MCF 10A (cell line): ENCODE measurements at regions of chr9 and their contacts with region 1.

Region 1: GRCh38 chr9:71384352-71384751 is 262.9 kb upstream of the TRPM3 start:
- DNase-seq: no peak
- H3K4me3 Mint-ChIP-seq: no peak overlapping the region
- H3K27ac Mint-ChIP-seq: no peak overlapping the region
- H3K4me1 Mint-ChIP-seq: no peaks in the 10 kb centered on the region
- H3K27me3 Mint-ChIP-seq: peaks cover 10% of the 10 kb centered on the region
- CTCF ChIP-seq: no peak

Region 2: GRCh38 chr9:71403106-71403505 is 18.8 kb after region 1 on chr9:
- CTCF ChIA-PET with region 1: no interaction called
- POLR2A ChIA-PET with region 1: no interaction called
- intact Hi-C with region 1: loop called (anchors 2 kb)
- DNase-seq: no peak
- H3K4me3 Mint-ChIP-seq: no peak overlapping the region
- H3K27ac Mint-ChIP-seq: no peak overlapping the region
- H3K4me1 Mint-ChIP-seq: no peaks in the 10 kb centered on the region
- H3K27me3 Mint-ChIP-seq: no peaks in the 10 kb centered on the region
- CTCF ChIP-seq: no peak